Heart left ventricle (tissue), 16 donors: ENCODE measurements at regions of chr17 and their contacts with region 1.

Region 1: DNA sequence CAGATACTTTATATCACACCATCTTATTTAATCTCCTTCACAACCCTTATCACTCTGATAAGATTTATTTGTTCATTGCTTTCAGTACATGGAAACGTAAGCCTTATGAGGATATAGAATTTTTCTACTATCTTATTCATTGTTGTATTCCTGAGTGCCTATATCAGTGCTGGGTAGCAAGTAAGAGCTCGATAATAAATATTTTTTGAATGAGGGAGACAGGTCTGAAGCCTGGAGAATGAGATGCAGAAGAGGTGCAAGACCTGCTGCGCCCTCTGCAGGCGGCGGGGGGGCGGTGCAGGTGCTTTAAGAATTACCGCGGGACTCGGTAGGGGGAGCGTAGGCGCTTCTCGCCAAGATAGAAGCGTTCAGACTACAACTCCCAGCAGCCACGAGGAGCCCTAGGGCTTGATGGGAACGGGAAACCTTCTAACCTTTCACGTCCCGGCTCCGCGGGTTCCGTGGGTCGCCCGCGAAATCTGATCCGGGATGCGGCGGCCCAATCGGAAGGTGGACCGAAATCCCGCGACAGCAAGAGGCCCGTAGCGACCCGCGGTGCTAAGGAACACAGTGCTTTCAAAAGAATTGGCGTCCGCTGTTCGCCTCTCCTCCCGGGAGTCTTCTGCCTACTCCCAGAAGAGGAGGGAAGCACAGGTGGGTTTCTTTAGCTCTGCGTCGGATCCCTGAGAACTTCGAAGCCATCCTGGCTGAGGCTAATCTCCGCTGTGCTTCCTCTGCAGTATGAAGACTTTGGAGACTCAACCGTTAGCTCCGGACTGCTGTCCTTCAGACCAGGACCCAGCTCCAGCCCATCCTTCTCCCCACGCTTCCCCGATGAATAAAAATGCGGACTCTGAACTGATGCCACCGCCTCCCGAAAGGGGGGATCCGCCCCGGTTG is at the start of gene WRAP53:
- DNase-seq: peak; percentile 96 to 99 (median 97)
- ATAC-seq: peak; percentile 92 to 97 (median 94)
- H3K4me3 ChIP-seq: peak within 1 kb of the TSS; percentile 67 to 97 (median 86)
- H3K27ac ChIP-seq: peak within 1 kb of the TSS; percentile 47 to 99 (median 95)
- H3K4me1 ChIP-seq: peaks cover 0 to 37% (median 24%) of the 10 kb centered on the region in 12 donors
- H3K27me3 ChIP-seq: no peaks in the 10 kb centered on the region
- CTCF ChIP-seq: peak; percentile 98 to 100 (median 99)
- POLR2A ChIP-seq: peak in 1 of 2 donors; percentile 64
- total RNA-seq, gene WRAP53: 3.7 to 9.8 (median 4.8) TPM

Region 2: DNA sequence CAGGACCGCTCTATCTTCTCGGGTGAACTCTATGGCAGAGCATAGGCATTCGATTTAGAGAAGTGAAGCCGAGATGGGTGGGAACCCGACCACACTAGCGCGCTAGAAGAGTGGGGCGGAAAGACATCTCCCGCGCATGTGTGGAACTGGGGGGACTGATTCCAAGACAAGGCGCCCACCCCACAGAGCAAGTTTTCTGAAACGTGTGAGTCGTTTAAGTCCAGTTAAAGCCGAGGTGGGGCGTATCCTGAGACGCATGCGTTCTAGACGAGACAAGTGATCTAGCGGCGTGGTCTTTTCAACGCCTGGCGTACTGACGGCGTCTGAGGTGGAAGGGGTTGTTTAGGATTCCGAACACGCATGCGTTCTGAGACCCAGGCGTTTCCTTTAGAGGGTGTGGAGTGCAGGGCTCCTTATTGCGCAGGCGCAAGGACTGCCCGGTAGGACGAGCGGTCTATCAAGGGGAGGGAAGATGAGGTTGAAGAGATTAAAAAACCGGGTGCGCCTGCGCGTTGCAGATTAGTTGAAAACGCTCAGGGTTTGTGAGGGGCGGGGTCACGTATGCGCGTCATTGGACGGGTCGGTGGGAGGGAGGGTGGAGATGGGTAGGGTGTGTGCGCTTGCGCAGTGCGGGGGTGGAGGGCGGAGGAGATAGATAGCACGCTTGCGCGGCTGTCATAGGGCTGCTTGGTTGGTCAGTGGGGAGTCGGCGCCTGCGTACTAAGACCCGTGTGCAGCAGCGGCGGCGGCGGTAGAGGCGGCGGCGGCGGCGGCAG is 381.1 kb before region 1 on chr17 and contains the start of gene EIF5A:
- intact Hi-C with region 1: loop called in 1 of 10 experiments (anchors 5 kb)
- DNase-seq: peak; percentile 100
- ATAC-seq: peak; percentile 91 to 97 (median 95)
- H3K4me3 ChIP-seq: peak within 1 kb of the TSS; percentile 69 to 98 (median 92)
- H3K27ac ChIP-seq: peak within 1 kb of the TSS; percentile 85 to 100 (median 97)
- H3K4me1 ChIP-seq: peaks cover 4 to 39% (median 28%) of the 10 kb centered on the region in 12 donors
- H3K27me3 ChIP-seq: no peaks in the 10 kb centered on the region
- CTCF ChIP-seq: no peak
- POLR2A ChIP-seq: peak in 1 of 2 donors; percentile 78
- total RNA-seq, gene EIF5A: 120 to 500 (median 257) TPM

Region 3: GRCh38 chr17:7484067-7484918 is 203.9 kb before region 1 on chr17 and contains the start of gene POLR2A:
- intact Hi-C with region 1: loop called in 1 of 10 experiments (anchors 5 kb)
- DNase-seq: peak; percentile 98 to 99 (median 99)
- ATAC-seq: peak; percentile 84 to 90 (median 87)
- H3K4me3 ChIP-seq: peak within 1 kb of the TSS; percentile 35 to 85 (median 72)
- H3K27ac ChIP-seq: peak within 1 kb of the TSS; percentile 94 to 100 (median 100)
- H3K4me1 ChIP-seq: peaks cover 8 to 76% (median 55%) of the 10 kb centered on the region in 12 donors
- H3K27me3 ChIP-seq: no peaks in the 10 kb centered on the region
- CTCF ChIP-seq: peak in 1 of 12 donors; percentile 4
- POLR2A ChIP-seq: peak; percentile 99 to 100
- total RNA-seq, gene POLR2A: 31.4 to 77.6 (median 50.7) TPM

Region 4: GRCh38 chr17:7583253-7584109 is 104.7 kb before region 1 on chr17 and contains the start of gene MPDU1:
- intact Hi-C with region 1: loop called in 3 of 10 experiments (anchors 5 kb)
- DNase-seq: peak; percentile 97 to 99 (median 98)
- ATAC-seq: peak; percentile 84 to 93 (median 87)
- H3K4me3 ChIP-seq: peak within 1 kb of the TSS; percentile 41 to 77 (median 67)
- H3K27ac ChIP-seq: peak within 1 kb of the TSS; percentile 88 to 98 (median 94)
- H3K4me1 ChIP-seq: peaks cover 4 to 75% (median 43%) of the 10 kb centered on the region in 12 donors
- H3K27me3 ChIP-seq: no peaks in the 10 kb centered on the region
- CTCF ChIP-seq: peak in 2 of 12 donors; percentile 3 to 18
- POLR2A ChIP-seq: peak in 1 of 2 donors; percentile 32
- total RNA-seq, gene MPDU1: 18.4 to 90.1 (median 25.4) TPM

Region 5: DNA sequence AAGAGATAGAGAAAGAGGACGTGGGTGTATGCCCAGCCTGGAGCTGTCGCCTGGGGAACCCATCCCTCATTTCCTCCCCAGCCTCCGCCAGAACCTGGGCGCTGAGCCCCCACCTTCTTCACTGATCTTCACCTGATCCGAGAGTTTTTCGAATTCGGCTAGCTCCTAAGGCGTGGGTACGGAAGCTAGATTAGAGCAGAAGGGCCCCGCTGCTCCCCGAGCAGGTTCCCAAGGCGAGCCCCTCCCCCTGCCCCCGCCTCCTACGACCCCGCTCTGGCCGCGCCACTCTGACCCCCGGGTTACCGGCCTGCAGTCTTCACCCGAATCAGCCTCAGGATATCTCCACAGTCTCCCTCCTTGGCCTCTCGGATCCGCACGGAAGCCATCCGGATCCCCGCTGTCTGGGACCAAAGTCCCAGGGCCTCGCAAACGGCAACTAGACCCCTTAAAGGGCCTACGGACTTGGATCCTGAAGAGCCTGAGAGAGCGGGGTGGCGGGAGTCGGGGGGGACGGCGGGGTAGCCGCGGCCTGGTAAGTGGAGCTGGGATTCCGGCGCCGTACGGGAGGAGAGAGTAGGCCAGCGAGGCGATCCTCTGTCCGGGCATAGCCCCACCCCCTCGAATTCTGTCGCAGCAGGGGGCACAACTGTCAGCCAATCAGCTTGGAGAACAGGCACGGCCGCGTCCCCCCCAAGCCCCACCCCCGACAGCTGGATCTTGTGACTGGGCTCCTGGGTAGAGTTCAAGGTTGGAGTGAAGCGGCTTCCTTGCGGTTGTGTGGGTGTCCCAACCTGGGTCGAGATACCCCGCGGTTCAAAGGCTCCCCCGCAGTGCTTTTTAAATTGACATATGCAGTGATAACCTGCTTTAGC is 60.7 kb before region 1 on chr17 and contains the start of gene SAT2:
- intact Hi-C with region 1: loop called in 8 of 10 experiments (anchors 2 to 5 kb)
- DNase-seq: peak; percentile 95 to 97 (median 96)
- ATAC-seq: peak; percentile 97 to 99 (median 98)
- H3K4me3 ChIP-seq: peak within 1 kb of the TSS; percentile 44 to 94 (median 84)
- H3K27ac ChIP-seq: peak within 1 kb of the TSS; percentile 85 to 98 (median 92)
- H3K4me1 ChIP-seq: peaks cover 0 to 26% (median 11%) of the 10 kb centered on the region in 12 donors
- H3K27me3 ChIP-seq: no peaks in the 10 kb centered on the region
- CTCF ChIP-seq: no peak
- POLR2A ChIP-seq: peak in 1 of 2 donors; percentile 64
- total RNA-seq, gene SAT2: 50.0 to 76.0 (median 57.3) TPM

Region 6: GRCh38 chr17:7650509-7651096 is 37.6 kb before region 1 on chr17 and contains the start of gene ATP1B2:
- intact Hi-C with region 1: loop called in 1 of 10 experiments (anchors 5 kb)
- DNase-seq: peak; percentile 71 to 86 (median 77)
- ATAC-seq: peak; percentile 67 to 86 (median 78)
- H3K4me3 ChIP-seq: peak within 1 kb of the TSS; percentile 31 to 69 (median 56)
- H3K27ac ChIP-seq: peak within 1 kb of the TSS in 10 of 12 donors; percentile 51 to 81 (median 62)
- H3K4me1 ChIP-seq: peaks cover 0 to 20% (median 15%) of the 10 kb centered on the region in 12 donors
- H3K27me3 ChIP-seq: peaks cover 0 to 38% (median 14%) of the 10 kb centered on the region in 9 donors
- CTCF ChIP-seq: no peak
- POLR2A ChIP-seq: no peak
- total RNA-seq, gene ATP1B2: 1.3 to 6.6 (median 2.9) TPM

Region 7: GRCh38 chr17:7834962-7835813 is 147.0 kb after region 1 on chr17:
- intact Hi-C with region 1: loop called in 1 of 10 experiments (anchors 5 kb)
- DNase-seq: peak; percentile 98 to 99 (median 99)
- ATAC-seq: peak; percentile 79 to 84 (median 82)
- H3K4me3 ChIP-seq: peak overlapping the region; percentile 59 to 99 (median 80)
- H3K27ac ChIP-seq: peak overlapping the region; percentile 86 to 100 (median 98)
- H3K4me1 ChIP-seq: peaks cover 0 to 56% (median 35%) of the 10 kb centered on the region in 12 donors
- H3K27me3 ChIP-seq: no peaks in the 10 kb centered on the region
- CTCF ChIP-seq: peak; percentile 56 to 94 (median 80)
- POLR2A ChIP-seq: peak; percentile 31 to 71